MCF 10A (cell line): ENCODE measurements at regions of chr10 and their contacts with region 1.

Region 1: DNA sequence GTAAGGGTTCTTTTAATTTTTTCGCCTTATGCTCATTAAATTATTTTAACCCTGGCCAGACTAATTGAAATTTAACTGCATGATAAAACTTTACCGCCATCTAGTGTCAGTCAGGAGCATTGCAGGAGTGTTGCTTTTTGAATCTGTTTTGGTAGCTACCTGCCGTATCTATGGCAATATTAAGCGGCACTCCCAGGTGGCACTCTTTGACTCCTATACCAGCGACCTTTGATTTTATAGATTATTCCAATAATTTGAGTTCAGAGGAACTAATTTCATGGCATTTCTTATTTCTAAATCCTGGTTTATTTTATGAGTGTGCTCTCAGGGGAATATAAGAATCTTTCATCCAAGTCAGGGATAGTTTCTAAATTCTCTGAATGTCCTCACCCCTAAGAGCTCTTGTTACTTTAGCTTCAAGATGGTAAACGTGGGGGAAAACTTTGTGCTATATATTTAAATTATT is 198.9 kb downstream of the REEP3 start:
- DNase-seq: peak; percentile 74
- H3K4me3 Mint-ChIP-seq: no peak overlapping the region
- H3K27ac Mint-ChIP-seq: no peak overlapping the region
- H3K4me1 Mint-ChIP-seq: no peaks in the 10 kb centered on the region
- H3K27me3 Mint-ChIP-seq: peaks cover 7% of the 10 kb centered on the region
- CTCF ChIP-seq: peak; percentile 93

Region 2: GRCh38 chr10:63210611-63211196 is 509.4 kb before region 1 on chr10:
- CTCF ChIA-PET with region 1: interaction called, 29 read pairs
- POLR2A ChIA-PET with region 1: no interaction called
- intact Hi-C with region 1: no loop called
- DNase-seq: no peak
- H3K4me3 Mint-ChIP-seq: no peak overlapping the region
- H3K27ac Mint-ChIP-seq: no peak overlapping the region
- H3K4me1 Mint-ChIP-seq: peaks cover 15% of the 10 kb centered on the region
- H3K27me3 Mint-ChIP-seq: no peaks in the 10 kb centered on the region
- CTCF ChIP-seq: no peak

Region 3: DNA sequence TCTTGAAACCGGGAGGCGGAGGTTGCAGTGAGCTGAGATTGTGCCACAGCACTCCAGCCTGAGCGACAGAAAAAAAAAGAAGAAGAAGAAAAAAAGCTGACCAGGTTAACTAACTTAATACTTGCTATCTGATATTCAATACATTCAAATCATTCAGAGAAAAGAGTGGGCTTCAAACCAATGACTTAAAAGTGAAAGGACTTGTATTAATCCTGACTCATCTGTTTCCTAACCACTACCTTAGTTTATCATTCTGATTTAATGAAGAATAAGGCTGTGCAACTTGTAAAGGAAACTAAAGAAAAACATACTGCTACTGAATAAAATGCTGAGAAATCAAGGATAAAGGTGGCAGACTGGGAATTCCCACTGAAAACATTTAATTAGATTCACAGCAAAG is 458.6 kb before region 1 on chr10:
- CTCF ChIA-PET with region 1: interaction called, 10 read pairs
- POLR2A ChIA-PET with region 1: interaction called, 3 read pairs
- intact Hi-C with region 1: no loop called
- DNase-seq: no peak
- H3K4me3 Mint-ChIP-seq: no peak overlapping the region
- H3K27ac Mint-ChIP-seq: peak overlapping the region; percentile 54
- H3K4me1 Mint-ChIP-seq: peaks cover 43% of the 10 kb centered on the region
- H3K27me3 Mint-ChIP-seq: no peaks in the 10 kb centered on the region
- CTCF ChIP-seq: no peak

Region 4: DNA sequence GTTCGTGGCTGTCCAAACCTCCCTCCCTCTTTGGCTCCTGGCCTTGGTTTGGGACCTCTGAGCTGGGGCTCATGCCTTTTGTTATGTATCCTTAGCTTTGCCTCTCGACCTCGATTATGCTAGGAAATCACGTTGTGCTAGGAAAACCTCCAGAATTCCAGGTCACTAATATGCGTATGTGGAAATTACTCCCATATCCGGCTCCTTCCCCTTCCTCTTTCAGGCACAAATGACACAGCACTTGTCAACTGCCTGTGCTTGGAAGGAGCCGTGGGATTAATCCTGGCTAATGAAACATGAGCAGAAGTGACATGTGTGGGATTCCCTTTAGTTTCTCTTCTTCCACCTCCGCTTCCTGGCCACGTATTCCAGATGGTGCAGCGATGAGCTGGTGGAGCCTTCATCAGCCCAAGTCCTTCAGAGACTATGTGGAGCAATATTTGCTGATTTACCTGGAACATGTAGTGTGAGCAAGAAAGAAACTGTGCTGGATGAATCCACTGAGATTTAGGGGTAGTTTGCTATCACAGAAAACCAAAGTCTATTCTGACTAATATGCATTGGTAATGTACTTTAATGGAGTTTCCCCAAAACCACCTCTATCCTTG is 49.7 kb before region 1 on chr10:
- CTCF ChIA-PET with region 1: interaction called, 20 read pairs
- POLR2A ChIA-PET with region 1: interaction called, 3 read pairs
- intact Hi-C with region 1: no loop called
- DNase-seq: no peak
- H3K4me3 Mint-ChIP-seq: no peak overlapping the region
- H3K27ac Mint-ChIP-seq: no peak overlapping the region
- H3K4me1 Mint-ChIP-seq: peaks cover 7% of the 10 kb centered on the region
- H3K27me3 Mint-ChIP-seq: no peaks in the 10 kb centered on the region
- CTCF ChIP-seq: no peak

Region 5: GRCh38 chr10:63707254-63707910 is 12.7 kb before region 1 on chr10:
- CTCF ChIA-PET with region 1: interaction called, 12 read pairs
- POLR2A ChIA-PET with region 1: interaction called, 11 read pairs
- intact Hi-C with region 1: no loop called
- DNase-seq: peak; percentile 98
- H3K4me3 Mint-ChIP-seq: no peak overlapping the region
- H3K27ac Mint-ChIP-seq: peak overlapping the region; percentile 61
- H3K4me1 Mint-ChIP-seq: peaks cover 42% of the 10 kb centered on the region
- H3K27me3 Mint-ChIP-seq: no peaks in the 10 kb centered on the region
- CTCF ChIP-seq: no peak

Region 6: GRCh38 chr10:63758080-63758479 is 38.0 kb after region 1 on chr10:
- CTCF ChIA-PET with region 1: interaction called, 16 read pairs
- POLR2A ChIA-PET with region 1: no interaction called
- intact Hi-C with region 1: no loop called
- DNase-seq: no peak
- H3K4me3 Mint-ChIP-seq: no peak overlapping the region
- H3K27ac Mint-ChIP-seq: no peak overlapping the region
- H3K4me1 Mint-ChIP-seq: no peaks in the 10 kb centered on the region
- H3K27me3 Mint-ChIP-seq: no peaks in the 10 kb centered on the region
- CTCF ChIP-seq: no peak

Region 7: DNA sequence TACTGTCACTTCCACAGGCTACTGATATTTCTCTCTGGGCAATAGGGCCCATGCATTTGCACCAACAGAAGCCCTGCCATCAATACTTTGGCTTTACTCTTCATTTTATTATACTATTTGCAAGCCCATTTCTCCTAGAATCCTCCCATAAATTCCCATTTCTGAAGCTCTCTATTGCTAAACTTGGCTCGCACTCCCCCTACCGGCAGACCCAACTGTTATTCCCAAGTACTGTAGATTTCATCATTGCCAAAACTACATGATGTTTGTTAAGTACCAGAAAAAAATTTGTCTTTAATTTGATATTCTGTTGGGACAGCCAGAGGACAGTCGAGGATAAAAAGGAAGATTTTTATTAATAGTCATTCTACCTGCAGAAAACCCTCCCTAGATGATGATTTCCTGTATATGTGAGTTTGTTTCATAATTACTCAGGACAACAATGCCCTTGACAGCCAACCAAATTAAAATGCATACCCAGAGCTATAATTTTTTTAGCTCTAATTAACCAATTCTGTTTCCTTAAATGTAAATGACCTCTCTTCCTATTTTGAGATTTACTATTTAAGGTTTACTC is 99.7 kb after region 1 on chr10:
- CTCF ChIA-PET with region 1: interaction called, 12 read pairs
- POLR2A ChIA-PET with region 1: no interaction called
- intact Hi-C with region 1: no loop called
- DNase-seq: peak; percentile 74
- H3K4me3 Mint-ChIP-seq: no peak overlapping the region
- H3K27ac Mint-ChIP-seq: no peak overlapping the region
- H3K4me1 Mint-ChIP-seq: no peaks in the 10 kb centered on the region
- H3K27me3 Mint-ChIP-seq: peaks cover 11% of the 10 kb centered on the region
- CTCF ChIP-seq: peak; percentile 64

Region 8: GRCh38 chr10:63935705-63936104 is 215.6 kb after region 1 on chr10:
- CTCF ChIA-PET with region 1: no interaction called
- POLR2A ChIA-PET with region 1: no interaction called
- intact Hi-C with region 1: no loop called
- DNase-seq: peak; percentile 22
- H3K4me3 Mint-ChIP-seq: no peak overlapping the region
- H3K27ac Mint-ChIP-seq: no peak overlapping the region
- H3K4me1 Mint-ChIP-seq: no peaks in the 10 kb centered on the region
- H3K27me3 Mint-ChIP-seq: peaks cover 22% of the 10 kb centered on the region
- CTCF ChIP-seq: peak; percentile 26